MCF 10A (cell line): ENCODE measurements at regions of chr1 and their contacts with region 1.

Region 1: DNA sequence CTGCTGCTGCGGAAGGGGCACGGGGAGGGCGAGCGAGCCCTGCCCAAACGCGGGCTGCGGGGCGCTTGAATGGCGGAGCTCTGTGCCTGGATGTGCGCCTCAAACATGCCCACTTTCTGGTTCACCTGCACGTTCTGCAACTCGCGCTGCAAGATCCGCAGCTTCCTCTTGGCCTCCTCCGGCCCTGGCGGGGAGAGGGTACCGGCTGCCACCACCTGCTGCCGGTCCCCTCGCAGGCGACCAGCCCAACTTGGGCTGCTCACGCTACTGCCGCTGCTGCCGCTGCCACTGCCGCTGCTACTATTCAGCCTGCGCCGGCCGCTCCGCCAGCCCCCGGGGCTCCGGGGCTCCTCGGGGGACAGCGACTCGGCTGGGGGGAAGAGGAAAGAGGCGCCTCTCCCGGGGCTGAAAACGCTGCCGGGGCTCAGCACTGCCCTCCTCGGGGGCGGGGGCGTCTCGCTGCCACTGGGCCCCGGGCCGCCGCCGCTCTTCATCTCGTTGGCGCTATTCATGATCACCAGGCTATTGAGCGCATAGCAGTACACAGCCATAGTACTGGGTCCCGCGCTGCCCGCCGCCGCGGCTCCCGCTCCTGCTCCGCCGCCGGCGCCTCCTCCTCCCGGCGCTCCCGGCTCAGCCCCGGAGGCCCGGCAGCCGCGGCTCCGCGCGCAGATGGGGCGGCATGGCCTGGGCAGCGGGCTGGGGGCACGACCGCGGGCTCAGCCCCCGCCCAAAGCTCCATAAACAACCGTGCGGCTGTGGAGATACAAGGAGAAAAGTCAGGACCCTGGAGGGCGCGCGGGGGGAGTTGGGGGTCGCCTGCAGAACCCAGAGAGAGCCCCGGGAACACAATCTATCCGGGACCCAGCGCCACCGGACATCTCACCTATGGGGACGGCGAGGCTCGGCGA is 1.9 kb downstream of the ITPKB start:
- DNase-seq: no peak
- H3K4me3 Mint-ChIP-seq: peak overlapping the region; percentile 82
- H3K27ac Mint-ChIP-seq: peak overlapping the region; percentile 33
- H3K4me1 Mint-ChIP-seq: peaks cover 28% of the 10 kb centered on the region
- H3K27me3 Mint-ChIP-seq: no peaks in the 10 kb centered on the region
- CTCF ChIP-seq: no peak

Region 2: DNA sequence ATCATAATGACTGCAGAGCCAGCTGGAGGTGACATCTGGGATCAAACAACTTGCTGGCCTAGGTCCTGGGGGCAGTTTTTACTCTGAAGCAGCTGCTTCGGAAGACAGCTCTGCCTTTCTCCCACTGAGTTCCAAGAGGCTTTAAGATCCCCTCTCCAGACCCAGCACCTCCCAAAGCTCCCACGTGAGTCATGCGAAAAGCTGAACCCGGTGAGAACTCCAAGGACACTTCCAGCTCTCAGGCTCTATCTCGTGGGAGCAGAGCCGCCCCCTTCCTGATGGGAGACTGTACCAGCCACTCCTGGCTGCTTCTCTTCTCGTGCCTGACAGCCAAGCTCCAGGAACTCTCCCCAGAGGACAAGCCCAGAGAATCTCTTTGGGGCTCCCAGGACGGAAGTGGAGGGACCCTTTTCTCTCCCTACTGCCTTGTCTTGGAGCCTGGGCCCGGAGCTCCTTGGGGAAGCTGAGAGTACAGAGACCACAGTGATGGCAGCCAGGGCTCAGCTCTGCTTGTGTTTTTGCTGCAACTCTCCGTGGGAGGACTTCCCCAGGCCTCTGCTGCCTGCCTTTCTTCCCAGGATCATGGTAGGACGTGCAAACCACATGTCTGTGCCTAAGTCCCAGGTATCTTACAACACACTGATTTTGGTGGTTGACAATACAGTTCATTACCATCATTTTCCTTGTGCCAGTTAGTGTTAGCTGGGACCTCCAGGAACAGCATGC is 148.0 kb before region 1 on chr1:
- CTCF ChIA-PET with region 1: no interaction called
- POLR2A ChIA-PET with region 1: no interaction called
- intact Hi-C with region 1: no loop called
- DNase-seq: peak; percentile 32
- H3K4me3 Mint-ChIP-seq: no peak overlapping the region
- H3K27ac Mint-ChIP-seq: no peak overlapping the region
- H3K4me1 Mint-ChIP-seq: peaks cover 1% of the 10 kb centered on the region
- H3K27me3 Mint-ChIP-seq: peaks cover 19% of the 10 kb centered on the region
- CTCF ChIP-seq: no peak

Region 3: DNA sequence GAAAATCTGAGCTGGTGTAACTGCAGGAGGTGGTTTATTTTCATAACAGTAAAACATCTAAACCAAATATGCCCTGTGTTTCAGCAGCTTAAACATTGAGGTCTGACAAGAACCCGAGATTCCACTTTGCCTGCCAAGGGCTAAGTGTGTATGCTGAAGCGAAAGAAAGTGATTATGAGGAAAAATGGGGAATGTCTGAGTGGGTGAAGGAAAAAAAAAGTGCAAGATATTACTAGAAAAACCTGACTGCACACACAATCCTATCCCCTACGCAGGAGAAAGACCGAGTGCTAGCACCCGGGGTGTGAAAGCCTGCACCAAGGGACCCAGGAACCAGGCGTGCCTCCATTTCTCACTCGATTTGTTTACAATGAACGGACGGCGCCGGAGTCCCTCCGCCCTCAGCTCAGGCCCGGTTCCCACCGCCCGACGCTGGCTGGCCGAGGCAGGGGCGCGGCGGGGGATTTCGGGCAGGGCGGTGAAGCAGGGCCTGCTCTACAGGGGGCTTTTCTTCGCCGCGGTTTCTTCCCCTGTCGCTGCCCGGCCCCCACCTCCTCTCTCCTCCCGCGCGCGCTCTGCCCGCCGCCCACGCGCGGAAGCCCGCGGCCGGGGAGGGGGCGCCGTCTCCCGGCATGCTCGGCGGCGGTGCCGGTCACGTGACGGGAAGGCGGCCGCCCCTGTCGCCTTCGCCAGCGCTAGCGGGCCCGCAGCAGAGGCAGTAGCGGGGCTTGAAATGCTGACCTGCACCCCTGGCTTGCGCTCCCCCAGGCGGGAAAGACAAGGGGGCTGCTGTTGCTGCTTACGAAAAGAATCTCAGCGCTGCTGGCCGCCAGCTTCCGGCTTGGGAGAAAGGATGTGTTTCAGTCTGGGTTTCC is 34.0 kb before region 1 on chr1:
- CTCF ChIA-PET with region 1: interaction called, 4 read pairs
- POLR2A ChIA-PET with region 1: interaction called, 26 read pairs
- intact Hi-C with region 1: loop called (anchors 2 kb)
- DNase-seq: peak; percentile 75
- H3K4me3 Mint-ChIP-seq: peak overlapping the region; percentile 62
- H3K27ac Mint-ChIP-seq: peak overlapping the region; percentile 9
- H3K4me1 Mint-ChIP-seq: peaks cover 14% of the 10 kb centered on the region
- H3K27me3 Mint-ChIP-seq: no peaks in the 10 kb centered on the region
- CTCF ChIP-seq: no peak

Region 4: DNA sequence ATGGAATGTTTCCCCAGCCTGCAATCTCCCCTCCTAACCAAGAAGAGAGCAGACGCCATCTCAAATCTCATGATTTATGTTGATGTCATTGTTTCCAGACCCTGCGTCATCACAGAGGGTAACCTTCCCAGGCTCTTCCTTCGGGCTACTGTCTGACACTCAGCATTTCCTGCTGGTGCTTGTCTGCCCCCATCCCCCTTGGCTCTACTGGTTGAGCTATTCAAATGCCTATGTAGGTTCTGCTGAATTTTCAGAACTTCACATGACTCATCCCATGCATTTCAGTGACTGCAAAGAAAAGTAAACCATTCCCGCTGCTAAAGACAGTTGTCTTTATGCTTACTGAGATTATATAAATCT is 26.7 kb after region 1 on chr1:
- CTCF ChIA-PET with region 1: interaction called, 5 read pairs
- POLR2A ChIA-PET with region 1: interaction called, 61 read pairs
- intact Hi-C with region 1: loop called (anchors 2 kb)
- DNase-seq: peak; percentile 97
- H3K4me3 Mint-ChIP-seq: no peak overlapping the region
- H3K27ac Mint-ChIP-seq: peak overlapping the region; percentile 4
- H3K4me1 Mint-ChIP-seq: peaks cover 37% of the 10 kb centered on the region
- H3K27me3 Mint-ChIP-seq: no peaks in the 10 kb centered on the region
- CTCF ChIP-seq: no peak

Region 5: GRCh38 chr1:226778657-226779058 is 41.5 kb after region 1 on chr1:
- CTCF ChIA-PET with region 1: interaction called, 3 read pairs
- POLR2A ChIA-PET with region 1: interaction called, 9 read pairs
- intact Hi-C with region 1: loop called (anchors 2 kb)
- DNase-seq: peak; percentile 99
- H3K4me3 Mint-ChIP-seq: no peak overlapping the region
- H3K27ac Mint-ChIP-seq: peak overlapping the region; percentile 65
- H3K4me1 Mint-ChIP-seq: peaks cover 16% of the 10 kb centered on the region
- H3K27me3 Mint-ChIP-seq: no peaks in the 10 kb centered on the region
- CTCF ChIP-seq: no peak

Region 6: DNA sequence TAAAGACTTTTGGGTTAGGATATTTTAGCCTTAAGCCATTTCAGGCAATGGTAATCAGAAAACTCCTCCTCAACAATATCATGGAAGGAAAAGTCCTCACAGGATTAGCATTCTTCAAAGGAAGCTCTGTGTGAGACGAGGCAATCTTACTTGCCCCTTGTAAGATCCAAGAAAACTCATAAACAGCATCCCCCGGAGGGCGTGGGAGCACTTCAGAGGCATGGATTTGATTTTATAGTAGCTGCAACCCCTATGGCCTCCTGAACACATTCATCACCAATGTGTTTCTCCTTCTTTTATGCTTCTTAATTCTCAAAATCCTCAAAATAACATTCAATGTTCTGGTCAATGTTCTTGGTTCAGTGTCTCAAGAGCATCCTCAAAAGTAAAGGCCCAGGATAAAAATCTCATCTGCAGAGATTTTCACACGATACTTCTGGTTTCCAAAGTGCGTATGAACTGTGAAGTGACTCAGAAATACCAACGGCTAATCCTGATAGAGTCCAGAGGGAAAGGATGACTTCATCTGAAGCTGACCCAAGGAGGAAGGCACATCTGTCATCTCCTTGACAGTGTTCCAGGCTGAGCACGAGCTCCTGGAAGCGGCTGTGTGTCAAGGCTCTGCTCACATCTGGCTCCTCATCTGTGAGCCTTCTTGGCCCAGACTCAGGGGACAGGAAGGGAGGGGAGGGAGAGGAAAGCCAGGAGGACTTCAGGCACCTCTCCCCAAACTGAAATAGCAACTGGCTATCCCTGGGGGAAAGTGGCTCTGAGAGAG is 84.0 kb after region 1 on chr1:
- CTCF ChIA-PET with region 1: interaction called, 5 read pairs
- POLR2A ChIA-PET with region 1: interaction called, 39 read pairs
- intact Hi-C with region 1: loop called (anchors 1 kb)
- DNase-seq: peak; percentile 96
- H3K4me3 Mint-ChIP-seq: no peak overlapping the region
- H3K27ac Mint-ChIP-seq: peak overlapping the region; percentile 11
- H3K4me1 Mint-ChIP-seq: peaks cover 19% of the 10 kb centered on the region
- H3K27me3 Mint-ChIP-seq: no peaks in the 10 kb centered on the region
- CTCF ChIP-seq: no peak

Region 7: GRCh38 chr1:226827968-226828513 is 90.9 kb after region 1 on chr1:
- CTCF ChIA-PET with region 1: interaction called, 6 read pairs
- POLR2A ChIA-PET with region 1: interaction called, 5 read pairs
- intact Hi-C with region 1: loop called (anchors 1 kb)
- DNase-seq: peak; percentile 100
- H3K4me3 Mint-ChIP-seq: no peak overlapping the region
- H3K27ac Mint-ChIP-seq: no peak overlapping the region
- H3K4me1 Mint-ChIP-seq: no peaks in the 10 kb centered on the region
- H3K27me3 Mint-ChIP-seq: no peaks in the 10 kb centered on the region
- CTCF ChIP-seq: peak; percentile 100